ENCODE measurements at regions of chr20 and their contacts with region 1.

Region 1: GRCh38 chr20:3051385-3052019 is 5.7 kb downstream of the MRPS26 start:
- DNase-seq: no peak
- ATAC-seq: no peak
- H3K4me3 ChIP-seq: no peak overlapping the region
- H3K27ac ChIP-seq: no peak overlapping the region
- H3K4me1 ChIP-seq: peaks cover 5 to 14% of the 10 kb centered on the region in 2 donors
- H3K27me3 ChIP-seq: no peaks in the 10 kb centered on the region
- CTCF ChIP-seq: no peak
- POLR2A ChIP-seq: no peak

Region 2: GRCh38 chr20:2900845-2901592 is 150.5 kb before region 1 on chr20:
- in situ Hi-C with region 1: no loop called
- intact Hi-C with region 1: no loop called
- DNase-seq: no peak
- ATAC-seq: no peak
- H3K4me3 ChIP-seq: no peak overlapping the region
- H3K27ac ChIP-seq: no peak overlapping the region
- H3K4me1 ChIP-seq: peaks cover 0 to 7% of the 10 kb centered on the region in 2 donors
- H3K27me3 ChIP-seq: no peaks in the 10 kb centered on the region
- CTCF ChIP-seq: no peak
- POLR2A ChIP-seq: no peak

Region 3: DNA sequence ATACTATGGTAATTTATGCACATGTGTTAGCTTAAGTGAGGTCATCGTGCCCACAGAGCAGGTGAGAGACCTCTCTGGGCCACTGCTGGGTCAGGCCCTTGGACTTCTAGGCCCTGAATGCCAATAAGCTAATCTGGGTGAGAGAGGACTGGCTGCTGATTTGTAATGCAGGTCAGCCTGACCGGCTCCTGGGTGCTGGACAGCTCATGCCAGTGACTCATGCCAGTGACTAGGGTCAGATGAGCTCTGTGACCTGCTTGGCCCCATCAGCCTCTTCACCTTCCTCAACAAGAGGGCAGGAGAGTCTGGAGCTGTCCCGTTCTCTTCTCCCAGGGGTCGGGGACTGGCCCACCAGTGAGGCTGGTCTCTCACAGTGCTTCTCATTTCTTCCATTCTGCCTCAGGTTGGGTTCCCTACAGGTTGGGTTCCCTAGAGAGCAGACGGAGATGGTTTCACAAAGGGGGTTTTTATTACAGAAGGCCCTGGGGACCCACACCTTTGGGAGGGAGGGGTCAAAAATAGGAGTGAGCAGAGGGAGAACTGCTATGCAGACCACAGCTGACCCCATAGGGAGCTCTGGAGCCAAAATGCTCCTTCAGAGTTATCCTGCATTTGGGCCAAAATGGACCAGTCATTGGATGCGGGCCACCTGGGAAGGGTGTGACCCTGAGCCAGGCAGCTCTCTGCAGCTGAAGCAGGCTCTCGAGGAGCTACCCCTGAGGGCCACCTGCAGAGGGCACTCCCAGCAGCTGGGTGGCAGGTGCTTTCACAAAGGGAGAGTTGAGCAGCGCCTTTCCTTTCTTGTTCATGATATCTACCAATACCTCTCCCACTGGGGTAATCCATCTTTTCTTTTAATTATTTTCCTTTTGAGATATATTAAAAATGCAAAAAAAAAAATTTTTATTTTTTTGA is 17.7 kb after region 1 on chr20:
- in situ Hi-C with region 1: no loop called
- intact Hi-C with region 1: no loop called
- DNase-seq: peak in 1 of 2 donors; percentile 15
- ATAC-seq: peak; percentile 49 to 83
- H3K4me3 ChIP-seq: no peak overlapping the region
- H3K27ac ChIP-seq: no peak overlapping the region
- H3K4me1 ChIP-seq: no peaks in the 10 kb centered on the region
- H3K27me3 ChIP-seq: peaks cover 13 to 24% (median 19%) of the 10 kb centered on the region in 3 donors
- CTCF ChIP-seq: peak in 1 of 5 experiments; percentile 29
- POLR2A ChIP-seq: no peak

Region 4: DNA sequence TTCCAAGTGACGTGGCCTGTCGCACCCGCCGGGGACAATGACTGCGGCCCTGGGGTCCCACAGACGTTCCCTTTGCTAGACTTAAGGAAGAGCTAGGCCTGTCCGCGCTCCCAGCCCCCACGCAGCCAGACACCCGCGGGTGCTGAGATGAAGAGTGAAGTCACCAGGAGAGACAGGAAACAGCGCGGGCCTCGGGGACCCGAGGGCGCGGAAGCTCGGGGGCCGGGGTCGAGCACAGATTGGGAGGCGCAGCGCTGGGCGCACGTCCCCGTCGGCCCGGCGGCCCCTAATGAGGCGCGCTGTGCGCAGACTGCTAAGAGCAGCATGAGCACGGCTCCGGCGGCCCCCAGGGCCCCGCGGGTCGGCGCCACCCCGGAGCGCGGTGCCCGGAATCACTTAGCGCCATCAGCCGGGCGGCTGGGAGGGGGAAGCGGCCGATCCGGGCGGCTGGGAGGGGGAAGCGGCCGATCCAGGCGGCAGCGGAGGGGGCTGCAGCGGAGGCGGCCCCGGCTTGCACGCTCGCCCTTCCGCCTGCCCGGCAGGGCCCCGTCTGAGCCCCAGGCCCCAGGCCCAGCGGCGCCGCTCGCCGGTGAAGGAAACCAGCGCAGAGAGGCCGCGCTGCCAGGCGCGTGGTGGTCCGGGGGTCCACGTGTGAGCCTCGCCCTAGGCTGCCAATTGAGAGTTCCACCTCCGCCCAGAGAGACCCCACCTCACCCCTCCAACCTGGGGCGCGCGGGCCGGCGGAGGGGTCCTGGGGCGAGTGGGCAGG is 41.3 kb after region 1 on chr20:
- in situ Hi-C with region 1: no loop called
- intact Hi-C with region 1: no loop called
- DNase-seq: no peak
- ATAC-seq: no peak
- H3K4me3 ChIP-seq: peak overlapping the region; percentile 23 to 43 (median 34)
- H3K27ac ChIP-seq: no peak overlapping the region
- H3K4me1 ChIP-seq: no peaks in the 10 kb centered on the region
- H3K27me3 ChIP-seq: peaks cover 12 to 24% (median 14%) of the 10 kb centered on the region in 3 donors
- CTCF ChIP-seq: no peak
- POLR2A ChIP-seq: no peak

Region 5: DNA sequence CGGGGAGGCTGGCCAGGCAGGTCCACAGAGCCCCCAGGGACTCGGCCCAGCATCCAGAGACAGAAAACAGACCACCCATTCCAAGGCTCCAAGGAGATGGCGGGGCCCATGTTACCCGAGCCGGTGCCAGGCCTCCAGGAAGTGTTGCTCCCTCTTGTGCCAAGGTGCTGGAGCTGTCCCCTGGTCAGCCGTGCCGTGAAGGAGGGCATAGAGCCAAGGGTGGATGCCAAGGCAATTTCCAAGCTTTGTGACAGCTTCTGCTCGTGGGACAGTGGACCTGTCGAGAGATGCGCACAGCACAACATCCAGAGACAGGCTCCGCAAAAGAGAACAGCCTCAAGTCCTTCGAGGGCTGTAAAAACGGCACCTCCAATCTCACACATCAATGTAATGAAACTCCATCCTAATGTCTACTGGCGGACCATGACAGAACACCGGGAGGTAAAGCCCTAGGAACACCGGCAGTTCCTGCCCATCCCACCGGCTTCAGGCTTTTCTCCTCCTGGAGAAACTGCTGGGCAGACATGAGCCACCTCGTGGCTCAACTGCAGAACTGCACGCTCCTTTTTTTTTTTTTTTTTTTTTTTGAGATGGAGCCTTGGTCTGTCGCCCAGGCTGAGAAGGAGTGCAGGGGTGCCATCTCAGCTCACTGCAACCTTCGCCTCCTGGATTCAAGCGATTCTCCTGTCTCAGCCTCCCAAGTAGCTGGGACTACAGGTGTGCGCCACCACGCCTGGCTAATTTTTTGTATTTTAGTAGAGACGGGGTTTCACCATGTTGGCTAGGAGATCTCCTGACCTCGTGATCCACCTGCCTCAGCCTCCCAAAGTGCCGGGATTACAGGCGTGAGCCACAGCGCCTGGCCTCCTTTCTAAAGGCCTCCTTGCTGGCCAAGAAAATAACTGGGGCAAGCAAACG is 63.9 kb after region 1 on chr20:
- in situ Hi-C with region 1: loop called in 2 of 4 experiments (anchors 5 to 10 kb)
- intact Hi-C with region 1: loop called (anchors 2 kb)
- DNase-seq: peak in 1 of 2 donors; percentile 39
- ATAC-seq: peak; percentile 16 to 42
- H3K4me3 ChIP-seq: no peak overlapping the region
- H3K27ac ChIP-seq: no peak overlapping the region
- H3K4me1 ChIP-seq: peaks cover 4 to 16% of the 10 kb centered on the region in 2 donors
- H3K27me3 ChIP-seq: no peaks in the 10 kb centered on the region
- CTCF ChIP-seq: peak; percentile 43 to 82 (median 63)
- POLR2A ChIP-seq: no peak

Measured in gastrocnemius medialis (tissue), 4 donors.